Gastrocnemius medialis (tissue), 4 donors: ENCODE measurements at regions of chr1 and their contacts with region 1.

Region 1: DNA sequence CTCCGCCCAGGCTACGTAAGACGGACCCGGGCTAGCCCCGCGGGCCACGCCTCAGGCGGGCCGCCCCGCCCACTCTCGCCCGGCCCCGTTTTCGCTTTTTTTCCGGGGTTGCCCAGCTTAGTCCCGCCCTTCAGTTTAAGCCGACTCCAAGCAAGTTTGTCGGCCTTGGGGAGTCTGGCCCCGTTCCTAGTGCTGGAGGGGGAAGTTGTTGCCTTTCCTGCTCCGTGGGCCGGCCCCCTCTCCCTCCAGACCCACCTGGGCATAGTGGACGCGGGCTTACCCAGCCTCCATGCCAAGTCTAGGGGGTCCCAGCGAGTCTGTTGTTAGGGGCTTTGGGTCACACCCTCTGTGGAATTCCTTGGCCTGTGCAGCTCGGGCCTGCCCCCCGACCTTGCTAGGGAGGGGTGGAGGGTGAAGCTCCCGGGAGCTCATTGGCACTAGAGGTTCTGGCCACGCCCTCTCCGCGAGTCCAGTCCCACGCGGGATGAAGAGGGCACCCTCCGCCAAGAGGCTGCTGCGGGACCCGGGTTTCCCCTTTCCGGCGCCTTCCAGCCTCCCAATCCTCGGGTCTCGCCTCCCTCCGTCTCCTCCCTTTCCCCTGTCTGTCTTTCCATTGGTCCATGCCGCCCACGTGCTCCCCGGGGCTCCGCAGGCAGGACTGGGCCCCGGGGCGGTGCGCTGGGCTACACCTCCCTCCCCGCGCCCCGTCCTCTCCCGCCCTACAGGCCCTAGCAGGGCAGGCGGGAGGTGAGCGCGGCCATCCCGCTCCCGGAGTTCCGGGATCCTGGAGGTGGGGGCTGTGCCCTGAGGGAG is 3.3 kb downstream of the RUSC1 start:
- DNase-seq: peak; percentile 94 to 96
- ATAC-seq: peak; percentile 84 to 86
- H3K4me3 ChIP-seq: peak overlapping the region; percentile 62 to 95 (median 90)
- H3K27ac ChIP-seq: peak overlapping the region; percentile 82 to 96 (median 87)
- H3K4me1 ChIP-seq: peaks cover 16 to 39% of the 10 kb centered on the region in 2 donors
- H3K27me3 ChIP-seq: no peaks in the 10 kb centered on the region
- CTCF ChIP-seq: no peak
- POLR2A ChIP-seq: peak; percentile 55 to 72

Region 2: DNA sequence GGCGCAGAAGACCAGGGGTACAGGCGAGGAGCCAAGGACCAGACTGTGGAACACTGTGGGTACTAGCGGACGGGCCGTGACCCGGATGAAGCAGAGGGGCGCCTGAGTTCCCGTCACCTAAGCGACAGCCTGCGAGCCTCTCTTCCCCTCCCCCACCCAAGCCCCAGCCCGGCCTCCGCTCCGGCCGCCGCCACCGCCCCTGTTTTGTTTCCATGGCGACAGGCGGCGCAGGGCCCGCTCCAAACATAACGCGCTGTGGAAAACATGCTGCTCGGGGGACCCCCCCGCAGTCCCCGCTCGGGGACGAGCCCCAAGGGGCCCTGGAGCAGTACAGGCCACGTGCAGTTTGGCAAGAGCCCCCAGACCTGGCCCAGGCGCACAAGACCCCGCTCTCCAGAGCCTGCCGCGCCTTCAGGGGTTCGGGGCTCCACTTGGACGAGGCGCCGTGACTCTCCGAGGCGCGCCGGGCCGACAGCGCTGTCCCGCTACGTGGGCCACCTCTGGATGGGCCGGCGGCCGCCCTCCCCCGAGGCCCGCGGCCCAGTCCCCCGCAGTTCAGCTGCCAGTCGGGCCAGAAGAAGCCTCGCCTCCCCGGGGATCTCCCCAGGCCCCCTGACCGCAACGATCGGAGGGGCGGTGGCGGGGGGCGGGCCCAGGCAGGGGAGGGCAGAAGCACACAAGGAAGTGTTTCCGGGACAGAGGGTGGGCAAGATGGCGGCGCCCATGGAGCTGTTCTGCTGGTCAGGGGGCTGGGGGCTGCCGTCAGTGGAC is 115.3 kb before region 1 on chr1 and contains the start of gene MTX1:
- in situ Hi-C with region 1: no loop called
- intact Hi-C with region 1: loop called (anchors 1 kb)
- DNase-seq: peak; percentile 78 to 79
- ATAC-seq: peak; percentile 82 to 84
- H3K4me3 ChIP-seq: peak within 1 kb of the TSS; percentile 88 to 95 (median 90)
- H3K27ac ChIP-seq: peak within 1 kb of the TSS; percentile 93 to 99 (median 96)
- H3K4me1 ChIP-seq: peaks cover 16 to 28% of the 10 kb centered on the region in 2 donors
- H3K27me3 ChIP-seq: no peaks in the 10 kb centered on the region
- CTCF ChIP-seq: peak in 1 of 5 experiments; percentile 4
- POLR2A ChIP-seq: peak; percentile 42 to 67
- total RNA-seq, gene MTX1: 14.4 to 26.9 (median 24.6) TPM

Region 3: GRCh38 chr1:155277070-155277895 is 46.7 kb before region 1 on chr1 and contains the start of gene HCN3:
- in situ Hi-C with region 1: loop called in 1 of 4 experiments (anchors 5 kb)
- intact Hi-C with region 1: loop called (anchors 1 kb)
- DNase-seq: peak; percentile 96
- ATAC-seq: peak; percentile 83 to 88
- H3K4me3 ChIP-seq: peak within 1 kb of the TSS; percentile 78 to 97 (median 80)
- H3K27ac ChIP-seq: peak within 1 kb of the TSS; percentile 66 to 71 (median 68)
- H3K4me1 ChIP-seq: peaks cover 12 to 25% of the 10 kb centered on the region in 2 donors
- H3K27me3 ChIP-seq: no peaks in the 10 kb centered on the region
- CTCF ChIP-seq: peak; percentile 55 to 83 (median 65)
- POLR2A ChIP-seq: no peak
- total RNA-seq, gene HCN3: 0.18 to 1.5 (median 1.1) TPM

Region 4: DNA sequence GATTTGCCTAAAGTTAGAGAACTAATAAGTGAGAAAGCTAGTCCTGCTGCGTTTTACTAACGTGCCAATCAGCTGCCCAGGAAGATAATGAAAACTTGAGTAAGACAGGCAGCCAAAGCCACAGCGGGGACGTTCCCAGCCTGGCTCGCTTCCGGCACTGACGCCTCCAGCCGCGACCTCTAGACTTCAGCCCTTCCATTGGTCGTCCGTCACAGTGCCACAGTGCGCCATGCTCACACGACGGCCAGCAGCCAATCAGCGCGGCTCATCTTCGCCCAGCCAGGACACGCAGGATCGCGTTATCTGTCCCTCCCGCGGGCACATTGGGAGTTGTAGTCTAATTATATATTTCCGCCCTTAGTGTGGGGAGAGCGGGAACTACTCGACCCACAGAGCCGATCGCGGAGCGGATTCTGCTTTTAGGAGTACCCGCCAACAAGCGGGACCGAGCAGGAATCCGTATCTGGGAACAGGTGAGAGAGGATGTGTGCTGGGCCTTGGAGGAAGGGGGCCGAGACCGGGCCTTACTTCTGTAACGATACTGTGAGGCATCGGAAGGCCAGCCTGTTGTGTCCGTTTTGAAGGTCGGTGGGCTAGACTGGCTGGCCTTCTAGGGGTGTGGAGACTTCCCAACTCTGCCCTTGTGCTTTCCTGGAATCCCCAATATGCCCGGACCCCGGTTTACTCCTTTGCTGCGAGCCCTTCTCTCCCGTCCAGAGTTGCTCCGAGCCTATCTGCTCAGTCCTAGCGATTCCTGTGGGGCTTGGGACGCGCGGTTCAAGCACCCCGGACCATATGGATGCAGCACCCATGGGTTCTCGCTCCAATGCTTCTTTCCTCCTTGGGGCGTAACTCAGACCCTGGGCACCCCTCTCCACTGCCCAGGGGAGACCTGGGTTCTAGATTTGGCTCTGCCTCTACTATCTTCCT is 15.2 kb before region 1 on chr1 and contains the start of gene FDPS:
- in situ Hi-C with region 1: no loop called
- intact Hi-C with region 1: loop called (anchors 1 kb)
- DNase-seq: peak; percentile 99
- ATAC-seq: peak; percentile 97 to 99
- H3K4me3 ChIP-seq: peak within 1 kb of the TSS; percentile 86 to 97 (median 90)
- H3K27ac ChIP-seq: peak within 1 kb of the TSS; percentile 83 to 93 (median 86)
- H3K4me1 ChIP-seq: peaks cover 14% of the 10 kb centered on the region in 2 donors
- H3K27me3 ChIP-seq: no peaks in the 10 kb centered on the region
- CTCF ChIP-seq: peak in 2 of 5 experiments; percentile 25 to 45
- POLR2A ChIP-seq: peak; percentile 56 to 70
- total RNA-seq, gene FDPS: 47.6 to 65.4 (median 49.1) TPM

Region 5: GRCh38 chr1:155859234-155859829 is 535.3 kb after region 1 on chr1 and contains the start of gene SYT11:
- in situ Hi-C with region 1: no loop called
- intact Hi-C with region 1: loop called (anchors 5 kb)
- DNase-seq: peak; percentile 90 to 92
- ATAC-seq: peak; percentile 94 to 98
- H3K4me3 ChIP-seq: peak within 1 kb of the TSS; percentile 60 to 75 (median 62)
- H3K27ac ChIP-seq: peak within 1 kb of the TSS; percentile 84 to 92 (median 89)
- H3K4me1 ChIP-seq: peaks cover 26 to 30% of the 10 kb centered on the region in 2 donors
- H3K27me3 ChIP-seq: no peaks in the 10 kb centered on the region
- CTCF ChIP-seq: no peak
- POLR2A ChIP-seq: peak in 1 of 2 donors; percentile 23
- total RNA-seq, gene SYT11: 2.4 to 5.3 (median 3.1) TPM